ENCODE measurements at regions of chr15 and their contacts with region 1.

Region 1: DNA sequence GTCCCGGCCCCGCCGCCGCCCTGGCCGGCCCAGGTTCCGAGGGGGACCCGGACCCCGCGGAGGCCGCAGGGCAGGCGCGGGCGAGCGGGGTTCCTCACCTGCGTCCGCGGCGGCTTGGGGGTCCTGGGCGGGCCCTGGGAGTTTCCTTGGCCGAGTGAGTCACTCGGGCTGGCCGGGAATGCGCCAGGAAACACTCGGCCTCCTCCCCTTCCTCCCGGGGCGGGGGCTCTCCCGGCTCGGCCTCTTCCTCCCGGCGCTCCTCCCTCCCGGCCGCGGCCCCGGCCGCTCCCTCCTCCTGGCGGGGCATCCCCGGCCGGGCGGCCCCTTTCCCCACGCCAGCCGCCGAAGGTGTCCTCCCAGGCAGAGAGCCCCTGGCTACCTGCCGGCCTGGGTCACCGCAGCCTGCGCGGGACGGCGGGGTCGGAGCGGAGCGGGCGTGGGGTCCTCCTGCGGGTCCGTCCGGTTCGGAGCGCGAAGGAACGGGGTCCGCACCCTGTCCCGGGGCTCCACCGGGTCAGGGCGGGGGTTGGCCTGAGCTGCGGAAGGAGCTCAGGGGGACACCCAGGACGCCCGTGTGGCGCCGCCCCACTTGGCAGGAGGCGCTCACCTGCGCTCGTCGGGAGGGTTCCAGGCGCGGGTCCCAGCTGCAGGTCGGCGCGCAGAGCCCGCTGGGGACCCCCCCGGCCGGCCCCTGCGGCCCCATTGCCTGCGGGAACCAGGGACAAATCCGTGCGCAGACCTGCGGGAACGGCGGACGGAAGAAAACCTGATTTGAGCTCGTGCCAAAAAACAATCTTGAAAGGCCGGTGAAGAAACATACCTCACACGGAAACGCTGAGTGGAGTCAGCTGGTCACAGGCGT is at the start of gene CYFIP1:
- DNase-seq: peak; percentile 91
- ATAC-seq: peak; percentile 97
- total RNA-seq, gene CYFIP1: 32.1 TPM

Region 2: GRCh38 chr15:22949074-22949547 is 31.3 kb before region 1 on chr15:
- intact Hi-C with region 1: loop called (anchors 5 kb)
- DNase-seq: peak; percentile 82
- ATAC-seq: peak; percentile 93

Region 3: GRCh38 chr15:22961762-22962161 is 18.7 kb before region 1 on chr15:
- intact Hi-C with region 1: loop called (anchors 2 kb)
- DNase-seq: no peak
- ATAC-seq: no peak

Region 4: DNA sequence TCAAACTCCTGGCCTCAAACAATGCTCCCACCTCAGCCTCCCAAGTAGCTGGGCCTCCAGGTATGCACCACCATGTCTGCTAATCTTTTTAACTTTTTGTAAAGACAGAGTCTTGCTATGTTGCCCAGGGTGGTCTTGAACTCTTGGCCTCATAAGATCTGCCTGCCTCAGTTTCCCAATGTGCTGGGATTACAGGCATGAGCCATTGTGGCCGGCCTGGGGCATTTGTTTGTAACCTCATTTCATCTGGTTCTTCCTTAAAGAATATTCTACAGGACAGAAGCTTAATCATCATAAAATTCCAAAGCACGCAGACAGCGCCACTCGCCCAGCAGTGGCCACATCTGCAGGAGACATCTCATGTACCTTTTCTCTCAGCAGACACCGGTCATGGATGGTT is 23.3 kb after region 1 on chr15:
- intact Hi-C with region 1: no loop called
- DNase-seq: no peak
- ATAC-seq: no peak

Region 5: GRCh38 chr15:23014394-23015000 is 34.1 kb after region 1 on chr15:
- intact Hi-C with region 1: no loop called
- DNase-seq: no peak
- ATAC-seq: no peak